ENCODE measurements at regions of chr7 and their contacts with region 1.

Region 1: DNA sequence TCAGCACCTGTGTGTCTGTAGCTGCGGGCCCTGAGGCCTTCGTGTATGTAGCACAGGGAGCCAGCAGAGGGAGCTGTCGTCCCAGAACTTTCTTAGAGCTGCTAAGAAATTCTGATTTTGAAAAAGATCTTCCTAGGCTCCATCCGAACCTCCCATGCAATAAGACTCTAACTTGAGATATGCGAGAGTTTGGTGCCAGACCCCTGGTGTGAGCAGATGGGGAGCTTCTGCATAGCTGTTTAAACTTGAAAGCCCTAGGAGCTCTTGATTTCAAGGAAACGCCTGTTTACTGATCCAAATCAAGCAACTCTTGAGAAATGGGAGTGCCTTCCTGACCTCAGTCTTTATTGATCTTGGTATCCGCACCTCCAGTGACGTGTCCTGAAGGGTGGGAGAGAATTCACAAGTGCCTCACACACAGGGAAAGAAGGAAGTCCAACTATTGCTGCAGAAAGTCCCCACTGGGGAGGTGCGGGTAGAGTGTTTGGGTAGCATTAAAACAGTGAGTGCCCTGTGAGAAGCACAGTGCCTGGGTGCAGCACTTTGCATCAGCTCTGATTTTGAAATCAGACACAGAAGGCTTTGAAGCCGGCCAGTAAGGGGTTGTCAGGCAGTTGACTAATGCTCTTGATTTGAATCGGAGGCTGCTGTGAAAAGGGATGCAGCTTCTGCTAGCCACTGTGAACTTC is 66.4 kb upstream of the STRIP2 start:
- DNase-seq: peak; percentile 93
- H3K4me3 ChIP-seq: peak overlapping the region; percentile 20
- H3K27ac ChIP-seq: peak overlapping the region; percentile 57
- H3K4me1 ChIP-seq: peaks cover 36% of the 10 kb centered on the region
- H3K27me3 ChIP-seq: no peaks in the 10 kb centered on the region
- CTCF ChIP-seq: peak; percentile 95

Region 2: GRCh38 chr7:129332284-129333035 is 35.4 kb before region 1 on chr7:
- CTCF ChIA-PET with region 1: no interaction called
- POLR2A ChIA-PET with region 1: no interaction called
- intact Hi-C with region 1: no loop called
- DNase-seq: no peak
- H3K4me3 ChIP-seq: no peak overlapping the region
- H3K27ac ChIP-seq: no peak overlapping the region
- H3K4me1 ChIP-seq: no peaks in the 10 kb centered on the region
- H3K27me3 ChIP-seq: no peaks in the 10 kb centered on the region
- CTCF ChIP-seq: no peak

Region 3: GRCh38 chr7:129343099-129343700 is 24.6 kb before region 1 on chr7:
- CTCF ChIA-PET with region 1: interaction called, 20 read pairs
- POLR2A ChIA-PET with region 1: no interaction called
- intact Hi-C with region 1: no loop called
- DNase-seq: peak; percentile 59
- H3K4me3 ChIP-seq: no peak overlapping the region
- H3K27ac ChIP-seq: no peak overlapping the region
- H3K4me1 ChIP-seq: no peaks in the 10 kb centered on the region
- H3K27me3 ChIP-seq: no peaks in the 10 kb centered on the region
- CTCF ChIP-seq: peak; percentile 83

Region 4: DNA sequence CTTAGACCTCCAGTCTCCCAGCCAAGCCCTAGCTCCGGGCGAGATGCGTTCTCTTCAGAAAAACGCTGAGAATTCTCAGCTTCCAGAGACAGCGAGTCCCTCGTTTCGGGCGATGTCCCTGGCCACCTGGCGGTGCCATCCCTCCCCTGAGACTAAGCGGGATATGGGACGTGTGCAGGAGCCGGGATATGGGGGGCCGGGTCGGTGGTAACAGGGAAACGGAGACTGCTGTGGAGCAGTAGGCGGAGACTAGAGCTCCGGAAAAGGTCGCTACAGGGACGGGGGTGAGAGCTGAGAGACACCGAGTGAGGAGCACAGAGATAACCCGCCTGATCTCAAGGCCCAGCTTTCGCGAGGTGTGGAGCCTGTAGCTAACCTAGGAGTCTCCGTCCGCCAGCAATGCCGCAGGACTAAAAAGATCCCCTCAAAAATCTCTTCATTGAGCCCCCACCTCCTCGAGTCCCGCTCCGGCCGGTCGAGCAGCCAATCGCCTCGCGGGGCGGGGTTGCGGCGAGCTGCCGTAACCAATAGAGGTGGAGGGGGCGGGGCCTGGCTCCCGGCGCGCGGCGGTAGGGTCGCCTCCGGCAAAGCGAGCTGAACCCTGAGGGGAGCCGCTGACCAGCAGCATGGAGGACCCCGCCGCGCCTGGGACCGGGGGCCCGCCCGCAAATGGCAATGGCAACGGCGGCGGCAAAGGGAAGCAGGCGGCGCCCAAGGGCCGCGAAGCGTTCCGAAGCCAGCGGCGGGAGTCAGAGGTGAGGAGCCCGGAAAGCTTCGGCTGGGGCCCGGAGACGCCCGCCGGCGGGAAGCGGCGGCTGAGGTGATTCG is 66.2 kb after region 1 on chr7 and contains the start of gene STRIP2:
- CTCF ChIA-PET with region 1: interaction called, 11 read pairs
- POLR2A ChIA-PET with region 1: no interaction called
- intact Hi-C with region 1: no loop called
- DNase-seq: peak; percentile 91
- H3K4me3 ChIP-seq: peak within 1 kb of the TSS; percentile 80
- H3K27ac ChIP-seq: peak within 1 kb of the TSS; percentile 77
- H3K4me1 ChIP-seq: peaks cover 9% of the 10 kb centered on the region
- H3K27me3 ChIP-seq: no peaks in the 10 kb centered on the region
- CTCF ChIP-seq: no peak
- total RNA-seq, gene STRIP2: 9.1 and 10.7 TPM in 2 replicates

Region 5: DNA sequence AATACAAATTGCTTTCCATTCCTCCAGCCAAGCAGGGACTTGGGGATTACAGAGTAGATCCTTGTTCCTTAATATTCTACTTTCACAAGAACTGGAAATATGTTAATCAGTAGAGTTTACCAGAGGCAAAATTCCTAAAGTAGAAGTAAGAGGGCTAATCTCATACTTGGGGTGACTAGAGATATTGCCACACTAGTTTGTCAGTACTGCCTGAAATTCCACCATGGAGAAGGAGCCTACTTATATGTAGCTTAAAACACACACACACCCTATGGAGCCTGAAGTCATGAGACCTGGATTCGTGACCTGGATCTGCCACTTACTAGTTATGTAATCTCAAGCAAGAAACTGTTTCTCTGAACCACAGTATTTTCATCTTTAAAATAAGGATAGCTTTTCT is 100.2 kb after region 1 on chr7:
- CTCF ChIA-PET with region 1: interaction called, 11 read pairs
- POLR2A ChIA-PET with region 1: no interaction called
- intact Hi-C with region 1: loop called (anchors 1 kb)
- DNase-seq: no peak
- H3K4me3 ChIP-seq: no peak overlapping the region
- H3K27ac ChIP-seq: peak overlapping the region; percentile 4
- H3K4me1 ChIP-seq: no peaks in the 10 kb centered on the region
- H3K27me3 ChIP-seq: no peaks in the 10 kb centered on the region
- CTCF ChIP-seq: no peak

Region 6: GRCh38 chr7:129644634-129645230 is 276.9 kb after region 1 on chr7:
- CTCF ChIA-PET with region 1: interaction called, 5 read pairs
- POLR2A ChIA-PET with region 1: no interaction called
- intact Hi-C with region 1: loop called (anchors 5 kb)
- DNase-seq: peak; percentile 77
- H3K4me3 ChIP-seq: no peak overlapping the region
- H3K27ac ChIP-seq: no peak overlapping the region
- H3K4me1 ChIP-seq: peaks cover 32% of the 10 kb centered on the region
- H3K27me3 ChIP-seq: no peaks in the 10 kb centered on the region
- CTCF ChIP-seq: peak; percentile 61

Region 7: GRCh38 chr7:129825496-129826267 is 457.8 kb after region 1 on chr7:
- CTCF ChIA-PET with region 1: interaction called, 4 read pairs
- POLR2A ChIA-PET with region 1: no interaction called
- intact Hi-C with region 1: loop called (anchors 5 kb)
- DNase-seq: peak; percentile 79
- H3K4me3 ChIP-seq: peak overlapping the region; percentile 60
- H3K27ac ChIP-seq: no peak overlapping the region
- H3K4me1 ChIP-seq: peaks cover 10% of the 10 kb centered on the region
- H3K27me3 ChIP-seq: no peaks in the 10 kb centered on the region
- CTCF ChIP-seq: peak; percentile 57

Region 8: GRCh38 chr7:129952653-129953560 is 585.1 kb after region 1 on chr7 and contains the start of gene UBE2H:
- CTCF ChIA-PET with region 1: no interaction called
- POLR2A ChIA-PET with region 1: no interaction called
- intact Hi-C with region 1: no loop called
- DNase-seq: peak; percentile 93
- H3K4me3 ChIP-seq: peak within 1 kb of the TSS; percentile 85
- H3K27ac ChIP-seq: peak within 1 kb of the TSS; percentile 88
- H3K4me1 ChIP-seq: peaks cover 16% of the 10 kb centered on the region
- H3K27me3 ChIP-seq: no peaks in the 10 kb centered on the region
- CTCF ChIP-seq: no peak
- total RNA-seq, gene UBE2H: 28.8 and 35.2 TPM in 2 replicates